Mammary epithelial cell (primary cell): ENCODE measurements at regions of chr13 and their contacts with region 1.

Region 1: GRCh38 chr13:46321494-46322225 is 65.4 kb downstream of the RUBCNL start:
- DNase-seq: peak; percentile 34
- H3K4me3 ChIP-seq: no peak overlapping the region
- H3K27ac ChIP-seq: no peak overlapping the region
- H3K4me1 ChIP-seq: peaks cover 9% of the 10 kb centered on the region
- H3K27me3 ChIP-seq: no peaks in the 10 kb centered on the region
- CTCF ChIP-seq: peak; percentile 79 to 85

Region 2: DNA sequence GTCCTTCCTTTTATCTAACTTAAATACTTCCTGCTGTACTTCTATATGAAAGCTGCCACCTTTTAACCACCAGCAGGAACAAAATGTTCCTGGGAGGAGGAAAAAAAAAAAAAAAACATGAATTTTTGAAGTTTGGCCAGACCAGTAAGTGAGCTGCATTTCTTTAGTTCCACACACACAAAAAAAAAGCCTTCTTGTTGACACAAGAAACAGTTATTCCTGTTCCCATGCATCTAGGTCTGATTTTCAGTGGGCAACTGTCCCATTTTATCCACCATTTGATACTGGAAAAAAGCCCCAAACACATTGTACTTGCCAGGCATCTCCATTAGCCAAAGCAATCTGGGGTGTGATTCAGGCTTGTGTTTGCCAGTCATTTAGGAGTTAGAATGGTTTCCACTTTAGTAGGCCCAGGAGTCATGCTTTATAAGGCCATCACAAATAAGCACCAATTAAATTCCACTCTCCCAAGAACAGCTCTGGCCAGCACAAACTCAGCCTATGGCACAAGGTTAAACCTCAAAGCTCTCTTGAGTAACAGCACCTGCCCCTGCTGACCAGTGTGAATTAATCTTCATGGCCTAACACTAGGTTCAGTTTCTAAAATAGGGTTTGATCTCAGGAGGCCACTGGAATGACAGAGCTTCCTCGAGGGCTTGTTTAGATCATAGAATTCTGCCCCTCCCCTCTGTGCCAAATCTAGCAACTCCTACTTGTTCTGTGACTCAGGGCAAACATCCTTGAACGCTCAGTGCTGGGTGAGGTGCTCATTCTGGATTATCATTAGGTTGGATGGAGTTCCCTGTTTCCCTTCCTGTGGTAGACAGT is 1399.5 kb before region 1 on chr13:
- CTCF ChIA-PET with region 1: no interaction called
- dilution Hi-C with region 1: no loop called
- in situ Hi-C with region 1: no loop called
- intact Hi-C with region 1: no loop called
- DNase-seq: peak; percentile 83
- H3K4me3 ChIP-seq: no peak overlapping the region
- H3K27ac ChIP-seq: peak overlapping the region; percentile 59
- H3K4me1 ChIP-seq: peaks cover 27% of the 10 kb centered on the region
- H3K27me3 ChIP-seq: no peaks in the 10 kb centered on the region
- CTCF ChIP-seq: no peak

Region 3: DNA sequence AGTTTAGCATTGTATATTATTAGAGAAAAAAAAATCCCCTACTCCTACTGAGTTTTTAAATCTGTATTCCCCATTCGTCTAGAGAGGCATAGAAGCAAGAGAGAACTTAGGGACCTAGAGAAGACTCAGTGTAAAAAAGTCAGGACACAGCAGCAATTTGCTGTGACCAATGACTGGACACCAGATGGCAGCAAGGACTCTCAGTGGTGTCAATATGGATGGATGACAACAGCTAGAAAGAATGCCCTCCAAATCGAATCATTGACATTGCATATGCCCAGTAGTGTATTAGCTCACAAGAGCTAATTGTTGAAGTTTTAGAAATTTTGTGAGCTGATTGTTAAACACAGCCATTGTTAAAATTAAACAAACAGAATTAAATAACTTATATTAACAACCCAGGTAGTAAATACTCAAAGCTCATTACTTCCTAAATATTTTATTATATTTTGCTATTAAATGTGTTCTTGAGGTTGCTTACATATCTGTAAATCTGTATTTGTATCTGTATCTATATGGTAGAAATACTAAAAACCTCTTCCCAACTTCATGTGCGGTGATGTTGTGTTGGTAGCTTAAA is 514.0 kb before region 1 on chr13:
- CTCF ChIA-PET with region 1: no interaction called
- dilution Hi-C with region 1: no loop called
- in situ Hi-C with region 1: loop called (anchors 25 kb)
- intact Hi-C with region 1: loop called (anchors 1 kb)
- DNase-seq: peak; percentile 61
- H3K4me3 ChIP-seq: no peak overlapping the region
- H3K27ac ChIP-seq: no peak overlapping the region
- H3K4me1 ChIP-seq: peaks cover 15% of the 10 kb centered on the region
- H3K27me3 ChIP-seq: peaks cover 2% of the 10 kb centered on the region
- CTCF ChIP-seq: peak; percentile 78 to 81

Region 4: DNA sequence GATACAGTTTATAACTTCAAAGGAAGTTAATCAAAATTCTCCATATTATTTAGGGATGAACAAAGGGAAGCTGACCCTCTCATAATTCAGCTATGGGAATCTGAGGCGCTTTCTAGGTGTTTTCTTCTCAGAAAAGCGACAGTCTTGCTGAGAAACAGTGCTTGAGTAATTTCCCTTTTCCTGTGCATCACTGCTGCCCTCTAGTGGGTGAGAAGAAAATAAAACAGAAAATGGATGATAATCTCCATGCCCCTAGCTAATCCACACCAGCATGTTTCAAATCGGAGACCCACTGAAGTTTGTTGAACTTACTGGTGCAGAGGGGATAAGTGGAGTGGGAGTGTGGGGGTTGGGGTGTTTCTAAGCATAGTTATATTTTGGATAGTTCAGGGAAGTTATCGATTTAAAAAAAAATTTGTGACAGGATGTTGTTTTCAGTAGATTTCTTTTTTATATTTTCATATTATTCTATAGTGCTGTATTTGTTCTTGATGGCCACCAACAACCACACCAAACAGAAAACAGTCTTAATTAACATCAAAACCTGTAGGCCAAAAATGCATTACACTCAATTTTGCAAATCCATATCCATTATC is 161.1 kb before region 1 on chr13:
- CTCF ChIA-PET with region 1: interaction called, 5 read pairs
- dilution Hi-C with region 1: no loop called
- in situ Hi-C with region 1: loop called in 1 of 2 experiments (anchors 5 kb)
- intact Hi-C with region 1: loop called (anchors 1 kb)
- DNase-seq: peak; percentile 36
- H3K4me3 ChIP-seq: no peak overlapping the region
- H3K27ac ChIP-seq: no peak overlapping the region
- H3K4me1 ChIP-seq: no peaks in the 10 kb centered on the region
- H3K27me3 ChIP-seq: peaks cover 4% of the 10 kb centered on the region
- CTCF ChIP-seq: peak; percentile 77 to 80

Region 5: DNA sequence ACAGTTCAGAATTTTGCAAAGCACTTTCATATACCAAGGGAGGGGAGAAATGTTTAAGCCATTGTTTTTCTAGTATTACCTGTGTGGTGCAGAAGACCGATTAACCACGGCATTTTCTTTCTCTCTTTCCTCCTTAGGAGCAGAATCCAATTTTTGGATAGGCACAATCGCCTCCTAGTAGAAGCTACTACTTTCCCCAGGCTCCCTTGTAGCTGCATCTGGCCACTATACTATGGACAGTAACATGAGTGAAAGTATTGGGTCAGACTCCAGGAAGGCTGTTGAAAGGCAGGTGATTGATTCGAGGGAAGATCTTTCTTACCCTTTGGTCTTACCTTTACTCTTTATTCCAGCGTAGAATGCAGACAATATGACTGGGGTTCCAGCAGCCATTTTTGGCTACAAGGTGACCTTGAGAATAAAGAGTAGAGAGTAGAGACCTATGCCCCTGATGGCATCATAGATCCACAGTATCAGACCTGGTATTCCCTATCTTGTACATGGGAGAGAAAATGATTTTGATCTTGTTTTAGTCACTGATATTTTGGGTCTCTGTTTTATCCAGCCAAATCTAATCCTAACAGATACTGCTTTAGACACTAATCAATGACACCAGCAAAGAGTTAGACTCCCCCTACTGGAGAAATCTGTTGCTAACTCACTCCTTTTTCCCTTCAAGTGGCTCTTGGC is 32.9 kb before region 1 on chr13:
- CTCF ChIA-PET with region 1: no interaction called
- dilution Hi-C with region 1: no loop called
- in situ Hi-C with region 1: no loop called
- intact Hi-C with region 1: loop called (anchors 1 kb)
- DNase-seq: peak; percentile 38
- H3K4me3 ChIP-seq: no peak overlapping the region
- H3K27ac ChIP-seq: no peak overlapping the region
- H3K4me1 ChIP-seq: no peaks in the 10 kb centered on the region
- H3K27me3 ChIP-seq: peaks cover 5% of the 10 kb centered on the region
- CTCF ChIP-seq: peak; percentile 74 to 84

Region 6: DNA sequence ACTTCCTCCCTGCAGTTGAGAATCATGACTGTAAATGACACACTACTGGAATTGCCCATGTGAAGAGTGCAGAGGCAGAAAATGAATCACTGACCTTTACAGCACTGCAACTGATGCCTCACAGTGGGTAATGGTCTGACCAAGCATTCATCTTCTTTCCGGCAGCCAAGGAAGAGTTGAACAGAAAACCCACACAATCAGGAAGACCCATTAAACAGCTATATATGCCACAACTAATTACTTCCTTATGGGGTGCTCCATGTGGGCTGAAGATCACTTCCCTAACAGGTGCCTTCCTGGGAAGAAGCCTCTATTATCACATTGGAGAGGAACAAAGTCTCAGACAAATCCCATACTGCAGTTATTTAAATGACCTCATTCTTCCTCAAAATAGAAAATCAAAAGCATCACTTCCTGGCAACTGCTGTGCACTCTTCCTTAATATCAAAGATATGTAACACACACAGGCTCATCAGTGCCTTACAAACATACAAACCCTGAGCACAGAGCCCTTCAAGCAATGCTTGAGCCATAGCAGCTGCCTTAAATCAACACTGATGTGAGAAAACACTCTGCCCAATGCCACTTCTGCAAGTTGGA is 19.6 kb after region 1 on chr13:
- CTCF ChIA-PET with region 1: no interaction called
- dilution Hi-C with region 1: no loop called
- in situ Hi-C with region 1: no loop called
- intact Hi-C with region 1: no loop called
- DNase-seq: peak; percentile 79
- H3K4me3 ChIP-seq: no peak overlapping the region
- H3K27ac ChIP-seq: no peak overlapping the region
- H3K4me1 ChIP-seq: peaks cover 5% of the 10 kb centered on the region
- H3K27me3 ChIP-seq: no peaks in the 10 kb centered on the region
- CTCF ChIP-seq: no peak

Region 7: DNA sequence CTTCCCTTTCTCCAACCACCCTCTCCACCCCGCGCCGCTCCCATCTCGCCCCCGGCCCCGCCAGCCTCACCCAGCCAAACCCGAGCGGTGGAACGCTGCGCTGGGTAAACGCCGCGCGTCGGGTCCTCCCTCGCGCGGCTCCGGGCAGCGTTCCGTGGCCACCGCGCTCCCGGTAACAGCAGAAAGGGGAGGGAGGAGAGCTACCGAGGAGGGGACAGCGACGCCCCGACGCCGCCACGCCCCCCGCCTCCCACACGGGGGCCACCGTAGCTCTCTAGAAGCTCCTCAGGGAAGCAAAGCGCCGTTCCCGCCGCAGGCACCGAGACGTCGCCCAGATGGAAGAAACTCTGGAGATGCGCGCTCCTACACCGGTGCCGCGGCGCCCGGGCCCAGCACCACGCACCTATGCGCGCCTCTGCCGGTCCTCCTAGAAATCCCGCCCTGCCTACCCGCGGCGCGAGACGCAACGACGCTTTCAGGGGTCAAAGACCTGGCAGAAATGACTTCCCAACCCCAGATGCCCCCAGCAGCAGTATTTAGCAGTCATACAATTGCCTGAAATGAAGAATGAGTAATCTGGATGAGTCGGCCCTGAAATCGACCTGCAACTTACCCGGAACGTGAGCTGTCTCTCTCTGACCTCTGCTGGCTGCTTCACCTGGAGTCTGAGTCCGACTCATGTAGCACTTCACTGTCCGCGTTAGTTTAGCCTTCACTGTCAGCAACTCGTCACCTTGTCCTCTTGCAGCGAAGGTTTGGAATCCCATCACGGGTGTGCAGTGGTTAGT is 65.6 kb after region 1 on chr13 and contains the start of gene RUBCNL:
- CTCF ChIA-PET with region 1: no interaction called
- dilution Hi-C with region 1: no loop called
- in situ Hi-C with region 1: no loop called
- intact Hi-C with region 1: loop called (anchors 1 kb)
- DNase-seq: peak; percentile 85
- H3K4me3 ChIP-seq: peak within 1 kb of the TSS; percentile 38 to 55 (median 45)
- H3K27ac ChIP-seq: no peak within 1 kb of the TSS
- H3K4me1 ChIP-seq: peaks cover 36% of the 10 kb centered on the region
- H3K27me3 ChIP-seq: no peaks in the 10 kb centered on the region
- CTCF ChIP-seq: peak in 1 of 2 donors; percentile 40
- total RNA-seq, gene RUBCNL: 7.0 to 20.2 TPM

Region 8: DNA sequence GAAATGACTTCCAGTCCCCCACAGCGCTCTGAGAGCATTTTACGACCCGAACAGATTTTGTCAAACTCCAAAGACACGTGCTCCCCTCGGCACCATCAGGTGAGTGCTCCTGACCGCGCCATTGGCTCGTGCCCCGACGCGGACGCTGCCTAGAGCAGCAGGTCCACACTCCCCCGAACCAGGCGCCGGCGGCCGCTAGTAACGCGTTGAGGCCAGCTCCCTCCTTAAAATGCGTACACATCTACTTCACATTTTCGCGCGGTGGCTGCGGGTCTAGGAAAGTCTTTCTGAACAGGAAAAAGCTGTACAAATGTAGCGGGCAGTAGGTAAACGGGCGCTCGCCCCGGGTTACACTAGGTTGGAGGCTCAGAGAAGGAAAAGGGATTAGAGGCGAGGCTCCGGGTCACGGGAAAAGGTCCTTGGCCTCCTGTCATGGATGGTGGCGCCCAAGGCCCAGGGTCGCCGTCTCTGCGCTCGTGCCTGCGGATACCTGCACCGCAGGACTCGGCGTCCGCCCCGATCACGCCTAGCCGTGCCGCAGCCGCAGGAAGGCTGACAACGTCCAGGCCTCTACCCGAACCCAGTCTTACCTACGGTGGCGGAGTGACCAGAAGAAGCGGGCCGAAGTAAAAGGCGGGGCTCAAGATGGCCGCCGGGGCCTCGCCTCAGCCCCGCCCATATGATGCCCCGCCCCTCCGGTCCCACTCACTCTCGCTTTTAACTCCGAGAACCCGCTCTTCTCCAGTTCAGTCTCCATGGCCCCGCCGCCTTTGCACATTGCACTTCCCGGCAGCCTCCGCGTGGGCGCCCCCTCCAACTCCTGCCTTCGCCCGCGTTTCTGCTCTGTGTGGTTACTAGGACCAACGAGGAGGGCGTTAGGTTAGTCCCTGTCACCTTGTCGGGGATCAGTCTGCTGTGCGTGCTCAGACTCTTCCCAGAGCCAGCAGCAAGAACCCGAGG is 475.1 kb after region 1 on chr13 and contains the start of gene ESD:
- CTCF ChIA-PET with region 1: no interaction called
- dilution Hi-C with region 1: no loop called
- in situ Hi-C with region 1: no loop called
- intact Hi-C with region 1: no loop called
- DNase-seq: peak; percentile 81
- H3K4me3 ChIP-seq: peak within 1 kb of the TSS; percentile 72 to 88 (median 82)
- H3K27ac ChIP-seq: peak within 1 kb of the TSS; percentile 77
- H3K4me1 ChIP-seq: peaks cover 23% of the 10 kb centered on the region
- H3K27me3 ChIP-seq: no peaks in the 10 kb centered on the region
- CTCF ChIP-seq: no peak
- total RNA-seq, gene ESD: 81.5 to 84.2 TPM